ENCODE measurements at regions of chr2 and their contacts with region 1.

Region 1: DNA sequence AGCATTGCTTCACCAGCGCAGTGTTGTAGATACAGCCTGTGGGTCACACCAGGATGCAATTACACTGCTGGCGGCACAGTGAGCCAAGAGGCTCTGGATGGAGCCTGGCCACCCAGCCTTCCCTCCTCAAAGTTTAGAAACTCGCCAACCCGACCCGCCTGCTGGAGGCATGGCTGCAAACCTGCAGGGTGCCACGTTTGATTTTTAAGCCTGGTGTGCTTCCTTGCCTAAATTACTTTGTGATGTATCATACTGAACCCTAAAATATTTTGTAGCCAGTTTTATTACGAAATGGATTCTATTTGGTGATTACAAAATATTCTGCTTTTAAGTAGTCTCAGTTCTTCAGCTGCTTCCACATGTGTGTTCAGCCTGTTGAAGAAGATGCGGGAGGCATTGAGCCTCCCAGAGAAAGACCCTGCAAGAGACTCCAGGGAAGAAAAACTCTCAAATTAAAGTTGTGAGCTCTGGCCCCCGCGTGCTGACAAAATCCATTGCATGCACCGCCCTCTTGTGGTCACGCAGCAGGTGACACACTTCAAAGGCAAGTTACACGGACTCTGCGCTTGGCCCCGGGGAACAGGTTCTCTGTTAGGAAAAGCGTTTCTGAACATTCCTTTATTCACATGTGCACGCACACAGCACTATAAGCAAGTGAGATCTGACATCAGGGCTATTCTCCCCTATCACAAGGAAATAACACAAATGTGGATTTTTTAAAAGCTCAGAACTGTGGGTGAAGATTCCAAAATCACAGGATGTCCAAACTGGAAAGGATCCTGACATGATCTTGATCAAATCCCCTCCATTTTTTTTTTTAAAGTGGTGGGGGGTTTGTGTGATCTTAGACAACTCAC is 63.0 kb upstream of the TWIST2 start:
- DNase-seq: peak; percentile 56
- H3K4me3 ChIP-seq: no peak overlapping the region
- H3K27ac ChIP-seq: peak overlapping the region in 3 of 4 donors; percentile 9 to 39 (median 25)
- H3K4me1 ChIP-seq: no peaks in the 10 kb centered on the region
- H3K27me3 ChIP-seq: no peaks in the 10 kb centered on the region
- CTCF ChIP-seq: peak; percentile 76 to 86 (median 83)
- EP300 ChIP-seq: no peak
- POLR2A ChIP-seq: no peak

Region 2: DNA sequence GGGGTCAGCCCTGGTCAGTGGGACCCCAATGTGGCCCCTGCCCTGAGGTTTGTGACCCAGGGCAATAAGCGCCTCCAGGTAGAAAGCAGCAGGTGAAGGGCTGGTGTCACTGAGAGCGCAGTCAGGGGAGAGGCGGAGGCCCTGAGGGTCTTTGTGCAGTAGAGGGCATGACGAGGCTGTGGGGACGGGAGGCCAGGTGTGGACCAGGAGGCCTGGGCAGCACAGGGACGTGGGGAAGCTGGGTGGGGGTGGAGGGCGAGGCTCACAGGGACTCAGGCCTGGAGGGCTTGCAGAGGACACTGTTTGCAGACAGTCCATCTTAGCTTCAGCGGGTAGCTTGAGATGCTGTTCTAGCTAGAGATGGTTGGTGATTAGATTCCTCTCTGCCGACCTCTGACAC is 432.5 kb before region 1 on chr2:
- in situ Hi-C with region 1: loop called in 3 of 4 experiments (anchors 25 kb)
- intact Hi-C with region 1: loop called (anchors 10 kb)
- DNase-seq: no peak
- H3K4me3 ChIP-seq: no peak overlapping the region
- H3K27ac ChIP-seq: no peak overlapping the region
- H3K4me1 ChIP-seq: peaks cover 0 to 4% (median 0%) of the 10 kb centered on the region in 4 donors
- H3K27me3 ChIP-seq: no peaks in the 10 kb centered on the region
- CTCF ChIP-seq: no peak
- EP300 ChIP-seq: no peak
- POLR2A ChIP-seq: no peak

Region 3: GRCh38 chr2:238370823-238371372 is 414.0 kb before region 1 on chr2:
- in situ Hi-C with region 1: loop called in 3 of 4 experiments (anchors 25 kb)
- intact Hi-C with region 1: no loop called
- DNase-seq: peak; percentile 67
- H3K4me3 ChIP-seq: no peak overlapping the region
- H3K27ac ChIP-seq: no peak overlapping the region
- H3K4me1 ChIP-seq: no peaks in the 10 kb centered on the region
- H3K27me3 ChIP-seq: no peaks in the 10 kb centered on the region
- CTCF ChIP-seq: peak; percentile 68 to 79 (median 72)
- EP300 ChIP-seq: no peak
- POLR2A ChIP-seq: no peak

Region 4: DNA sequence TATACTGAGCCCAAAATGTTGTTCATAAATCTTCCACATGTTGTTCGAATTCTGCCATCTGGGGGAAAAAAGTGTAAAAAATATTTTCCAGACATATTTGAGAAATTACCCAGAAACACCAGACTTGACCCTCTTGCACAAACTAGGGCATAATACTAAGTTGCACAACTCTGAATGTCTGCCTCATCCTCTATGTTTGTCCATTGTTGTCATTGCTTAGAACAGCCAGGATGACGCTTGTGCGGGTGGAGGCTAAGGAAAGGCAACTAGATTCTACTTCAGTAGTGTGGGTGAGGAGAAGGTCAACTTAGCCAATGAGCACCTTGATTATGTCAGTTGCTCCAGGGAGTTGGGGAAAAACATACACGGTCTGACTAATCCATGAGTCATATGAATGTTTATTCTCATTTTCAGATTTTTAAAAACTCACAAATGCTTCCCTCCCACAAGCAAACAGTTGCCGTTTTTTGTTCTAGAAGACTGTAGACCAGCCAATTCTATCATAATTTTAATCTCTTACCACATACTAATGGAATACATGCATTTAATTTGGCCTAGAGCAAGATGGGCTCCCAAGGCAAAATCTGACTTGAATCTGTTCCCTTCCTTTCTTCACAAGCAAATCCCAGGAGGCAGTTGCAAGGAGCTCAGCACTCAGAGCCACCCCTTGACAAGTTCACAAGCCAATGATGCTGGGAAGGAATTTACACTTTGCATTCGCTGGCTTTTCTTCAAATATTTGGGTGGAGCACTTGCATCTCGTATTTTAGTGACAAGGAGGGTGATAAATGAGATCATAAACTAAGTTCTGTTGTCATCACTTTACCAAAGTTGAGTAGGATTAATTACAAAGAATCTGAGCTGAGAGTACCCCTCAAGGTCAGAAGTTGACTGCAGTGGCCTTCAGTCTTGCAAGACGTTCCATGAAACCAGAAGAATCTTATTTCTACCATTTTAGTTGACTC is 100.3 kb before region 1 on chr2:
- in situ Hi-C with region 1: loop called in 1 of 4 experiments (anchors 10 kb)
- intact Hi-C with region 1: no loop called
- DNase-seq: no peak
- H3K4me3 ChIP-seq: no peak overlapping the region
- H3K27ac ChIP-seq: peak overlapping the region; percentile 43 to 73 (median 50)
- H3K4me1 ChIP-seq: peaks cover 0 to 4% (median 0%) of the 10 kb centered on the region in 4 donors
- H3K27me3 ChIP-seq: no peaks in the 10 kb centered on the region
- CTCF ChIP-seq: no peak
- EP300 ChIP-seq: peak; percentile 13
- POLR2A ChIP-seq: no peak

Region 5: GRCh38 chr2:238945433-238946150 is 160.7 kb after region 1 on chr2:
- in situ Hi-C with region 1: no loop called
- intact Hi-C with region 1: loop called (anchors 10 kb)
- DNase-seq: peak; percentile 48
- H3K4me3 ChIP-seq: no peak overlapping the region
- H3K27ac ChIP-seq: no peak overlapping the region
- H3K4me1 ChIP-seq: no peaks in the 10 kb centered on the region
- H3K27me3 ChIP-seq: no peaks in the 10 kb centered on the region
- CTCF ChIP-seq: peak; percentile 49 to 70 (median 67)
- EP300 ChIP-seq: no peak
- POLR2A ChIP-seq: no peak

Measured in transverse colon (tissue), 4 donors.